Posterior vena cava (tissue), 2 donors: ENCODE measurements at regions of chr6 and their contacts with region 1.

Region 1: DNA sequence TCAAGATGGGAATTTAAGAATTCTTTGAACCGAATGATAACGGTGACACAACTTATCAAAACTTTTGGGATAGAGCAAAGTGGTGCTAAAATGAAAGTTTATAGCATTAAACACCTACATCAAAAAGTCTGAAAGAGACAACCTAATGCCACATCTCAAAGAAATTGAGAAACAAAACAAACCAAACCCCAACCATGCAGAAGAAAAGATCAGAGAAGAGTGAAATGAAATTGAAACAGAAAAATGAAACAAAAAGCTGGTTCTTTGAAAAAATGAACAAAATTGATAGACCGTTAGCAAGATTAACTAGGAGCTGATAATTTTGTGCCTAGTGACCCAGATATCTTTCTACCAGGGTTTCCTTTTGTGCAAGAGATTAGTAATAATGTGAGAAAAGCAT is 248.0 kb upstream of the EYS start:
- DNase-seq: no peak

Region 2: GRCh38 chr6:66361886-66362285 is 406.9 kb after region 1 on chr6:
- intact Hi-C with region 1: loop called in 1 of 2 experiments (anchors 5 kb)
- DNase-seq: no peak